ENCODE measurements at regions of chr10 and their contacts with region 1.

Region 1: DNA sequence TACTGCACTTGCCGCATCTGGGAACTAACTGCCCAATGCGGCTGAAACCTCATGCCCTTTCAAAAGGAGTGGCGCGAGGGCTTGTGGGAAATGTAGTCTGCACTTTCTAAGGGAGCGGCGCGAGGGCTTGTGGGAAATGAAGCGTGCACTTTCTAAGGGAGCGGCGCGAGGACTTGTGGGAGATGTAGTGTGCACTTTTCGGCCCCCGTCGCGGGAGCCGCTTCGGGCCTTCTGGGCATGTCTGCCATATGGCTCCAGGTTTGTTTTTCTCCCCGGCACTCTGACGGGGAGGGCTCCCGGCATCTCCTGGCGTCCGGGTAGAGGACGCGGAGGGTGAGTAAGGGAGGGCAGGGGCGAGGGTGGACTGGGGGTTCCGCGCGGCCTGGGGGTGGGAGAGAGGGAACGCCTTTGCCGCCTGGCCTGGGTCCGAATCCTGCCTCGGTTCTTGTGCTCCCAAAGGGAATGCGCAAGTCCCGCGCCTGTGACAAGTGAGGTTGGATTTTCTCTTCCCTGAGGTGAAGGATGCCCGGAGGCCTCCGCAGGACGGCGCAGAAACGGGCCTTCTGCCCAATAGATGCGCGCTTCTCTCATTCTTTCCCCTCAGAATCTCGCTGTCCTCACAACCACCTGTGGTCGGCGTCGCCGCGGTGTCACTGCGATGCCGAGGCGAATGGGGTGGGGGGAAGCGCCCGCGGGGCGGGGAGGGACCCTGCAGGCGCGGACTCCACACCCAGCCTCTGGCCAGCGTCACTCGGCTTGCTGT is at the start of gene ZNF37A:
- DNase-seq: peak; percentile 75 to 95 (median 89)
- ATAC-seq: peak; percentile 97
- H3K4me3 ChIP-seq: peak within 1 kb of the TSS; percentile 52 to 89
- H3K4me3 Mint-ChIP-seq: peak within 1 kb of the TSS; percentile 89
- H3K27ac ChIP-seq: peak within 1 kb of the TSS; percentile 83 to 91
- H3K27ac Mint-ChIP-seq: peak within 1 kb of the TSS; percentile 95
- H3K4me1 ChIP-seq: peaks cover 16% of the 10 kb centered on the region
- H3K4me1 Mint-ChIP-seq: peaks cover 35% of the 10 kb centered on the region
- H3K27me3 ChIP-seq: no peaks in the 10 kb centered on the region
- H3K27me3 Mint-ChIP-seq: no peaks in the 10 kb centered on the region
- CTCF ChIP-seq: no peak
- total RNA-seq, gene ZNF37A: 12.4 to 12.8 TPM

Region 2: GRCh38 chr10:37857287-37858211 is 236.8 kb before region 1 on chr10 and contains the start of gene ZNF248:
- CTCF ChIA-PET with region 1: no interaction called
- POLR2A ChIA-PET with region 1: no interaction called
- intact Hi-C with region 1: loop called (anchors 1 to 2 kb)
- DNase-seq: peak; percentile 89 to 98 (median 94)
- ATAC-seq: peak; percentile 96
- H3K4me3 ChIP-seq: peak within 1 kb of the TSS; percentile 86 to 96
- H3K4me3 Mint-ChIP-seq: peak within 1 kb of the TSS; percentile 91
- H3K27ac ChIP-seq: peak within 1 kb of the TSS; percentile 89 to 96
- H3K27ac Mint-ChIP-seq: peak within 1 kb of the TSS; percentile 99
- H3K4me1 ChIP-seq: peaks cover 27% of the 10 kb centered on the region
- H3K4me1 Mint-ChIP-seq: peaks cover 41% of the 10 kb centered on the region
- H3K27me3 ChIP-seq: no peaks in the 10 kb centered on the region
- H3K27me3 Mint-ChIP-seq: no peaks in the 10 kb centered on the region
- CTCF ChIP-seq: no peak
- total RNA-seq, gene ZNF248: 2.3 to 2.9 TPM

Region 3: DNA sequence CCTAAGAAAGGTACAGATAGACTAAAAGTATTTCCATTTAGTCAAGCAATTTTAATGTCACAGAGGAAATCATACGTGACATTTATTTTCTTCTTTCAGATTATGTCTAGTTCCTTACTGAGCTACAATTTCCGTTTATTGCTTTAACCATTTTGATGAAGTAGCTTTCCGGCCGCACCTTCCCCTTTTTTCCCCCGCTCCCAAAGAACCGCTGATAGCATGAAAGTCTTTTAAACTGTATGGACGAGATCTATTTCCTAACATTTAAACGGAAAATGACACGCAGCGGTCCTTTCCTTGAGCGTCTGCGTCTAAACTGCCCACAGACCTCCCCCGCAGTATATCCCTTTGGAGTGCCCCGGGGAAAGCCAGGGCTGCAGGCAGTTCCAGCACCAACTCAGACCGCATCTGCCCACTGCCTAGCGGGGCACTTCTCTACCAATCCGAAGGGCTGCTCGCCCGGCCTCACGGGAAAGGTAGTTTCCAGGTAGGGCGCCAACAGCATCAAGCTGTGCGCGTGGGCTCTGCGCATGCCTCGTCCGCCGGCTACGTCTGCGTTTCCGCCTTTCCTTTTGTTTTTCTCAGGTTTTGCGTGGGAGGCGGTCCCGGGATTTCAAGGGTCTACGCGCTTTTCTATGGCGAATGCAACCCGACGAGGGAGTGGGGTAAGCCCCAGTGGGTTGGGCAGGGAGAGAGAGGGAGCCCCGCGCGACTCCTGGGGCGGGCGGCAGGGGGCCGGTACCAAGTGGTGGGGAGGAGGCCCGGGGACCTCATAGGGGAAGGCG is 84.0 kb before region 1 on chr10 and contains the start of gene ZNF33A:
- CTCF ChIA-PET with region 1: interaction called, 3 read pairs
- POLR2A ChIA-PET with region 1: interaction called, 6 read pairs
- intact Hi-C with region 1: loop called (anchors 1 kb)
- DNase-seq: peak; percentile 79 to 98 (median 91)
- ATAC-seq: peak; percentile 82
- H3K4me3 ChIP-seq: peak within 1 kb of the TSS; percentile 74 to 78
- H3K4me3 Mint-ChIP-seq: peak within 1 kb of the TSS; percentile 81
- H3K27ac ChIP-seq: peak within 1 kb of the TSS; percentile 98 to 99
- H3K27ac Mint-ChIP-seq: peak within 1 kb of the TSS; percentile 100
- H3K4me1 ChIP-seq: peaks cover 14% of the 10 kb centered on the region
- H3K4me1 Mint-ChIP-seq: peaks cover 39% of the 10 kb centered on the region
- H3K27me3 ChIP-seq: no peaks in the 10 kb centered on the region
- H3K27me3 Mint-ChIP-seq: no peaks in the 10 kb centered on the region
- CTCF ChIP-seq: no peak
- total RNA-seq, gene ZNF33A: 24.6 to 25.9 TPM

Region 4: GRCh38 chr10:38047666-38048065 is 46.7 kb before region 1 on chr10:
- CTCF ChIA-PET with region 1: no interaction called
- POLR2A ChIA-PET with region 1: no interaction called
- intact Hi-C with region 1: loop called in 1 of 2 experiments (anchors 5 kb)
- DNase-seq: no peak
- ATAC-seq: no peak
- H3K4me3 ChIP-seq: no peak overlapping the region
- H3K4me3 Mint-ChIP-seq: no peak overlapping the region
- H3K27ac ChIP-seq: no peak overlapping the region
- H3K27ac Mint-ChIP-seq: no peak overlapping the region
- H3K4me1 ChIP-seq: no peaks in the 10 kb centered on the region
- H3K4me1 Mint-ChIP-seq: peaks cover 16% of the 10 kb centered on the region
- H3K27me3 ChIP-seq: no peaks in the 10 kb centered on the region
- H3K27me3 Mint-ChIP-seq: no peaks in the 10 kb centered on the region
- CTCF ChIP-seq: no peak

Region 5: DNA sequence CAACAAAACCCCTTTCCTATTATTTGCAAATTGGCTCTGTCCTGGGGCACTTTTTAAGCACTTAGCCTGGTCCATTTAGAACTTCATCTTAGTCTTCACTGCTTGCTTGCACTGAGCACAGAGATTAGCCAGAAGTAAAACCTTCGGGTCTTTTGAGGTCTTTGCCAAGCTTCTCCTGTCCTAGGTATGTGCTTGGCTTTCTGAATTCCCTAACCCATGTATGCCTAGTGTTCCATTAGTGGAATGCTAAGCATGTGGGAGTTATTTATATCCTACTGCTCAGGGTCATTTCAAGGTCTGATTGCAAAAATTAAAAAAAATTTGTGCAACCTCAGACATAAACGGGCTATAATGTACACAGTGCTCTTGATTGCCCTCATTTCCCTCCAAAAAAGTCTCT is 17.8 kb after region 1 on chr10:
- CTCF ChIA-PET with region 1: no interaction called
- POLR2A ChIA-PET with region 1: no interaction called
- intact Hi-C with region 1: no loop called
- DNase-seq: no peak
- ATAC-seq: no peak
- H3K4me3 ChIP-seq: no peak overlapping the region
- H3K4me3 Mint-ChIP-seq: no peak overlapping the region
- H3K27ac ChIP-seq: no peak overlapping the region
- H3K27ac Mint-ChIP-seq: no peak overlapping the region
- H3K4me1 ChIP-seq: no peaks in the 10 kb centered on the region
- H3K4me1 Mint-ChIP-seq: no peaks in the 10 kb centered on the region
- H3K27me3 ChIP-seq: no peaks in the 10 kb centered on the region
- H3K27me3 Mint-ChIP-seq: no peaks in the 10 kb centered on the region
- CTCF ChIP-seq: no peak

Measured in CD8-positive, alpha-beta T cell (primary cell).